RWPE1 (cell line): ENCODE measurements at regions of chr12 and their contacts with region 1.

Region 1: DNA sequence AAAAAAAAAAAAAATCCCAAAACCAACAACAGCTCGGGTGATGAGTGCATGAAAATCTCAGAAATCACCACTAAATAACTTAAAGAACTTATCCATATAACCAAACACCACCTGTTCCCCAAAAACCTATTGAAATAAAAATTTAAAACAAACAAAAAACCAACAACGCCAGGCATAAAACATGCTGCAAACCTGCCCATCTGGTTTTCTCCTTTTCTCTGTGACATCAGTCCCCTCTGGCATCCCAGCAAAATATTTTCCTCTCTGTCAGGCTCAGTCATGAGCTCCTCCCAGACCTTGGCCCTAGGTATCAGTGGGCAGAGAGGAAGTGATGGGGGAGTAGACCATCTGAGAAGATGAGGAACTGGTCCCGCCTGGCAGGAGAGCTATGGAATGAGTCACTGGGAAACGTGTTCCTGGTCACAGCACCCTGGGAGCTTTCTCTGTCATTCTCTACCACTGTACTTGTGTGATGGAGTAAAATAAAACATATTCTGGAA is 4.9 kb upstream of the SRSF9 start:
- DNase-seq: peak; percentile 84
- H3K27ac ChIP-seq: peak overlapping the region; percentile 56
- CTCF ChIP-seq: no peak

Region 2: GRCh38 chr12:120292661-120293531 is 181.6 kb before region 1 on chr12 and contains the start of gene RNU4-1:
- CTCF ChIA-PET with region 1: no interaction called
- POLR2A ChIA-PET with region 1: interaction called, 10 read pairs
- DNase-seq: peak; percentile 65
- H3K27ac ChIP-seq: peak within 1 kb of the TSS; percentile 97
- CTCF ChIP-seq: no peak